PC-3 (cell line): ENCODE measurements at regions of chr4 and their contacts with region 1.

Region 1: DNA sequence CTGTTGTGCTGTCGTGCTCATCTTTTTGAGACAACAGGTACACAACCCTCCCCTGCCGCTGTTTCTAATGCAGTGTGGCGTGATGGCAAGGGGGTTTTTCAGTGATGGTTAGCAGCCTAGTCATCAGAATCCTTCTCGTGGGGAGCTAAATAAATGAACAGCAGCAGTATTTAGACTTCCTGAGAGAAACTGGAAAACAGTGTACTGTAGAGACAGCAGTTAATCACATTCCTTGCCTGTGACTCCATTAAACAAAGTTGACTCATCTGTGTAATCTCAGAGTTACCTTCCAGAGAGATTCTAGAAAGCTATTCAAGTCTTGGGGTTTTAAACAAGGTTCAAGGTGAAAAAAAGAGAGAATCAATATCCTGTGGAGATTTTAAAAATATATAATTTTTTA is 1753.2 kb upstream of the PCDH7 start:
- DNase-seq: peak; percentile 69
- ATAC-seq: peak; percentile 99
- H3K4me3 ChIP-seq: peak overlapping the region; percentile 42; the same call in 1 of the 2 replicates
- H3K27ac ChIP-seq: peak overlapping the region; percentile 54
- H3K4me1 ChIP-seq: peaks cover 12% of the 10 kb centered on the region
- H3K27me3 ChIP-seq: no peaks in the 10 kb centered on the region
- CTCF ChIP-seq: no peak

Region 2: GRCh38 chr4:28913466-28913865 is 53.5 kb before region 1 on chr4:
- CTCF ChIA-PET with region 1: no interaction called
- POLR2A ChIA-PET with region 1: no interaction called
- intact Hi-C with region 1: loop called (anchors 10 kb)
- DNase-seq: no peak
- ATAC-seq: no peak
- H3K4me3 ChIP-seq: no peak overlapping the region
- H3K27ac ChIP-seq: no peak overlapping the region
- H3K4me1 ChIP-seq: no peaks in the 10 kb centered on the region
- H3K27me3 ChIP-seq: no peaks in the 10 kb centered on the region
- CTCF ChIP-seq: no peak

Region 3: GRCh38 chr4:29033703-29034102 is 66.7 kb after region 1 on chr4:
- CTCF ChIA-PET with region 1: no interaction called
- POLR2A ChIA-PET with region 1: no interaction called
- intact Hi-C with region 1: no loop called
- DNase-seq: no peak
- ATAC-seq: no peak
- H3K4me3 ChIP-seq: no peak overlapping the region
- H3K27ac ChIP-seq: no peak overlapping the region
- H3K4me1 ChIP-seq: no peaks in the 10 kb centered on the region
- H3K27me3 ChIP-seq: no peaks in the 10 kb centered on the region
- CTCF ChIP-seq: no peak